ENCODE measurements at regions of chr5 and their contacts with region 1.

Region 1: DNA sequence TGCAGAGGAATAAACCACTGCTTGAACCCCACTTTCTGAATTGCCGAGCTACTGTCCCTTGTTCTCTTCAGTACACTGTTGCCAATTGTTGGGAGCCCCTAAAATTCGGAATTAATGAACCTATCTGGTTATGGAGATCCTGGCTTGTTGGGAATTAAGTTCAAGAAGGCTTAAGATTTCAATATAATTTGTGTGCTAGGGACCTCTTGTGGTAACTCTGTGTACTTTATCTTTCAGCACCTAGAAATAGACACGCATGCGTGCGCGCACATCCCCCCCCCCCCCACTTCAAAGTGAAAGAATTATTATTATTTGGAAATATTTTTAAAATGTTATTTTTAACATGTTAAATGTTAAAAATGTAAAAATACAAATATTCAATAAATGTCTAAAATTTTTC is 53.3 kb upstream of the FAM169A start:
- DNase-seq: peak in 2 of 5 donors; percentile 23 to 42
- H3K4me3 ChIP-seq: no peak overlapping the region
- H3K4me3 Mint-ChIP-seq: no peak overlapping the region
- H3K27ac ChIP-seq: no peak overlapping the region
- H3K27ac Mint-ChIP-seq: no peak overlapping the region
- H3K4me1 ChIP-seq: no peaks in the 10 kb centered on the region
- H3K4me1 Mint-ChIP-seq: no peaks in the 10 kb centered on the region
- H3K27me3 ChIP-seq: no peaks in the 10 kb centered on the region
- H3K27me3 Mint-ChIP-seq: peaks cover 3 to 4% of the 10 kb centered on the region in 2 donors

Region 2: GRCh38 chr5:74934949-74935751 is 15.7 kb after region 1 on chr5:
- CTCF ChIA-PET with region 1: interaction called, 10 read pairs
- POLR2A ChIA-PET with region 1: no interaction called
- DNase-seq: peak in 2 of 5 donors; percentile 22 to 46
- H3K4me3 ChIP-seq: peak overlapping the region; percentile 10
- H3K4me3 Mint-ChIP-seq: peak overlapping the region; percentile 21 to 87 (median 72)
- H3K27ac ChIP-seq: no peak overlapping the region
- H3K27ac Mint-ChIP-seq: peak overlapping the region in 7 of 8 donors; percentile 26 to 83 (median 70)
- H3K4me1 ChIP-seq: peaks cover 20% of the 10 kb centered on the region
- H3K4me1 Mint-ChIP-seq: peaks cover 18 to 42% (median 33%) of the 10 kb centered on the region in 3 donors
- H3K27me3 ChIP-seq: no peaks in the 10 kb centered on the region
- H3K27me3 Mint-ChIP-seq: peaks cover 12 to 16% of the 10 kb centered on the region in 2 donors